ENCODE measurements at regions of chr17 and their contacts with region 1.

Region 1: DNA sequence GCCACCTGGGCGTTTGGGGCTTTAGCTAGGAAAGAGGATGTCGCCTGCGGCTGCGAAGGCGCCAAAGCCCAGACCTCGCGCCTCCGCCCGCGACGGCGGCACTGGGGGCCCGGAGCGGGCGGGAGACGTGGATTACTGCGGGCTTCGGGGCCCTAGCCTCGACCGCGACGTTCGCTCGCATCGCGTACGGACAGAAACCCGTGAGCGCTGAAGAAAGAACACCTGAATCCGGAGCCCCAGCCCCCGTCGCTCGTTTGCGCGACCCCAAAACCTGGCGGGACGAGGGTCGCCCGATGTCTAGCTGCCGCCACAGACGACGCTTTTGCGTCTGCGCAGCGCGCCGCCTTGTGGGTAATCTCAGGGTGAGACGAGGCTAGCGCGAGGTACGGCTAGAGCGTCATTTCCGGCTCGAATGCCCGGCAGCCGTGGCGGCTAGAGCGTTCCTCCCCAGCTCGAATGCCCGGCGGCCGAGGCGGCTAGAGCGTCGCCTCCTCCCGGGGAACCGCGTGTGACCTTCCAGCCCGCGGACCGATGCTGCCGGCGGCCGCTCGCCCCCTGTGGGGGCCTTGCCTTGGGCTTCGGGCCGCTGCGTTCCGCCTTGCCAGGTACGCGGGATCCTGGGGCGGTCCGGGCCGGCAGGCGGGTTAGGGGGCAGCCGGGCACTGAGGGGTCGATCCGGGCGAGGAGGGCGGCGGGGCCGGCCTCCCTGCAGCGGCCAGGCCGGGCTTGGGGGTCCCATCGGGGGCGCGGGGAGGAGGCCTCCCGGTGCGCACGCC is at the start of gene MRPL12:
- DNase-seq: peak; percentile 91
- H3K4me3 Mint-ChIP-seq: peak within 1 kb of the TSS; percentile 95
- H3K27ac Mint-ChIP-seq: peak within 1 kb of the TSS; percentile 94
- H3K4me1 Mint-ChIP-seq: peaks cover 36% of the 10 kb centered on the region
- H3K27me3 Mint-ChIP-seq: no peaks in the 10 kb centered on the region
- total RNA-seq, gene MRPL12: 57.2 to 59.6 TPM

Region 2: DNA sequence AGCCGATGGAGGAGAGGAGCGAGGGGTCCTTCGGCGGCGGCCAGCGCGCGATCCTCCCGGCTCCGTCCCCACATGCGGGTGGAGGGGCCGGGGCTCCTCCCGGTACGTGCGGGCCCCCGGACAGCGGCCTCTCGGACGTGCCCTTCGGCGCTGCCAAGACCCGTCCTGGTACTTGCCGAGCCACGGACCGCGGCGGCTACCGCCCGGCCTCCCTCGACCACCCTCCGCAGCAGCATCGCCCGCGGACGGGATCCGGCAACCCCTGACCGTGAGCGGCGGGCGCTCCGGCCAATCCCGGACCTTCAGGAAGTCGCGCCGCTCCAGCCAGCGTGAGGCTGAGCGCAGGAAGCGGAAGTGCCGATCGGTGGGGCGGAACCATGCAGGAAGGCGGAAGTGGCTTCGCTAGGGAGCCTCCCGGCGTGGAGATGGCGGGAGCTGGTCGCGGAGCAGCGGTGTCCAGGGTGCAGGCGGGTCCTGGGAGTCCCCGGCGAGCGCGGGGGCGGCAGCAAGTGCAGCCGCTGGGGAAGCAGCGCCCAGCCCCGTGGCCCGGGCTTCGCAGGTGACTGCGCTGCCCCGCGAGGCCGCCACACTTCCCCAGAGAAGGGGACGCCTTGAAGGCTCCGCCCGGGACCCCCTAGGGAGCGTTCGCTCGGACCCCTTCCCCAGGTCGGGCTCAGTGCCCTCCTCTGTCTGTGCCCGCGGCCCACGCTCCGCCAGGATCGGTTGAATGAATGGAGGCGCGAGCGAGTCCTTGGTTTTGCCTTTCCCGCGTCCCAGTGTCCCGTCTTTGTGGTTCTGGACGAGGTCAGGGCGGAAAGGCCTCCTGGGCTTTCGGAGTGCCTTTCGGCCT is 36.6 kb before region 1 on chr17 and contains the starts of genes CCDC137 and OXLD1:
- CTCF ChIA-PET with region 1: interaction called, 3 read pairs
- POLR2A ChIA-PET with region 1: interaction called, 52 read pairs
- DNase-seq: peak; percentile 94
- H3K4me3 Mint-ChIP-seq: peak within 1 kb of the TSS; percentile 93
- H3K27ac Mint-ChIP-seq: peak within 1 kb of the TSS; percentile 94
- H3K4me1 Mint-ChIP-seq: peaks cover 62% of the 10 kb centered on the region
- H3K27me3 Mint-ChIP-seq: no peaks in the 10 kb centered on the region
- total RNA-seq, gene CCDC137: 28.8 to 33.3 TPM
- total RNA-seq, gene OXLD1: 59.3 TPM

Region 3: DNA sequence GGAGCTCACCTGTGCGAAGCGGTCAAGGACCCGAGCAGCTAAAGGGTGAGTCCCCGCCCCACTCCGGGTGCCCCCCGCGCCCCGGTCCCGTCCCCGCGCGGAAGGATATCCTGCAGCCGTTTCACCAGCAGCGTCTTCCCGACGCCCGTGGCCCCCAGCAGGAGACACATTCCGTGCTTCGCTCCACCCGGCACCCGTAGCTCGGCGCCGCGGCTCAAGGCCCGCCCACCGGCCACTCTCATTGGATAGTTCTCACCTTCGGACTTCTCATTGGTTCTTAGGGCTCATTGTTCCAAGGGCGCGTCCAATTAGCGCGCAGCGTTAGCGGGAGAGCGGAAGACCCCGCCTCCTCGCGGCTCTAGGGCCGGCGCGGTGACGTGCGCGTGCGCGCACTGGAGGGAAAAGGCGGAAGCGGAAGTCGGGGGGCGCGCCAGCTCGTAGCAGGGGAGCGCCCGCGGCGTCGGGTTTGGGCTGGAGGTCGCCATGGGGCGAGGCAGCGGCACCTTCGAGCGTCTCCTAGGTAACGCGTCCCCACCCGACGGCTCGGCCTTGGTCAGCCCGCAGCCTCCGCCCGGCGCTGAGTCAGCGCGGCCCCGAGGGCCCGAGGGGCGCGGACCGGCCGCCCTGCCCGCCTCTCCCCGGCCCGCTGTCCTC is 19.4 kb before region 1 on chr17 and contains the starts of genes ARL16 and HGS:
- CTCF ChIA-PET with region 1: interaction called, 42 read pairs
- POLR2A ChIA-PET with region 1: interaction called, 111 read pairs
- DNase-seq: peak; percentile 98
- H3K4me3 Mint-ChIP-seq: peak within 1 kb of the TSS; percentile 86
- H3K27ac Mint-ChIP-seq: peak within 1 kb of the TSS; percentile 90
- H3K4me1 Mint-ChIP-seq: peaks cover 42% of the 10 kb centered on the region
- H3K27me3 Mint-ChIP-seq: no peaks in the 10 kb centered on the region
- total RNA-seq, gene ARL16: 17.5 to 17.8 TPM
- total RNA-seq, gene HGS: 122 to 130 TPM

Region 4: GRCh38 chr17:81860756-81861518 is 157.8 kb after region 1 on chr17:
- CTCF ChIA-PET with region 1: interaction called, 3 read pairs
- POLR2A ChIA-PET with region 1: interaction called, 11 read pairs
- DNase-seq: peak; percentile 99
- H3K4me3 Mint-ChIP-seq: peak overlapping the region; percentile 97
- H3K27ac Mint-ChIP-seq: peak overlapping the region; percentile 97
- H3K4me1 Mint-ChIP-seq: peaks cover 50% of the 10 kb centered on the region
- H3K27me3 Mint-ChIP-seq: no peaks in the 10 kb centered on the region

Region 5: GRCh38 chr17:81890447-81891299 is 187.5 kb after region 1 on chr17:
- CTCF ChIA-PET with region 1: no interaction called
- POLR2A ChIA-PET with region 1: interaction called, 17 read pairs
- DNase-seq: peak; percentile 46
- H3K4me3 Mint-ChIP-seq: peak overlapping the region; percentile 87
- H3K27ac Mint-ChIP-seq: peak overlapping the region; percentile 94
- H3K4me1 Mint-ChIP-seq: peaks cover 43% of the 10 kb centered on the region
- H3K27me3 Mint-ChIP-seq: no peaks in the 10 kb centered on the region

Region 6: GRCh38 chr17:82267575-82268379 is 564.6 kb after region 1 on chr17:
- CTCF ChIA-PET with region 1: no interaction called
- POLR2A ChIA-PET with region 1: no interaction called
- DNase-seq: peak; percentile 45
- H3K4me3 Mint-ChIP-seq: no peak overlapping the region
- H3K27ac Mint-ChIP-seq: peak overlapping the region; percentile 40
- H3K4me1 Mint-ChIP-seq: peaks cover 63% of the 10 kb centered on the region
- H3K27me3 Mint-ChIP-seq: no peaks in the 10 kb centered on the region

Measured in activated CD4-positive, alpha-beta memory T cell treated with anti-CD3 and anti-CD28 coated beads, Interleukin-2, amount 10 ng/mL, durations not matched to agents 7 days and 5 days (primary cell).